PC-3 (cell line): ENCODE measurements at regions of chr3 and their contacts with region 1.

Region 1: GRCh38 chr3:183385698-183386613 is 42.5 kb downstream of the MCF2L2 start:
- DNase-seq: peak; percentile 86
- ATAC-seq: peak; percentile 73
- H3K4me3 ChIP-seq: no peak overlapping the region
- H3K27ac ChIP-seq: no peak overlapping the region
- H3K4me1 ChIP-seq: peaks cover 24% of the 10 kb centered on the region
- H3K27me3 ChIP-seq: no peaks in the 10 kb centered on the region
- CTCF ChIP-seq: peak; percentile 91

Region 2: GRCh38 chr3:182909318-182910040 is 476.5 kb before region 1 on chr3:
- CTCF ChIA-PET with region 1: no interaction called
- POLR2A ChIA-PET with region 1: no interaction called
- intact Hi-C with region 1: loop called (anchors 2 kb)
- DNase-seq: peak; percentile 38
- ATAC-seq: peak; percentile 51
- H3K4me3 ChIP-seq: no peak overlapping the region
- H3K27ac ChIP-seq: no peak overlapping the region
- H3K4me1 ChIP-seq: 0 out of 2 replicates have a peak, but pooled peaks cover 3% of the 10 kb centered on the region
- H3K27me3 ChIP-seq: no peaks in the 10 kb centered on the region
- CTCF ChIP-seq: peak; percentile 77

Region 3: GRCh38 chr3:183188895-183189462 is 197.0 kb before region 1 on chr3:
- CTCF ChIA-PET with region 1: interaction called, 55 read pairs
- POLR2A ChIA-PET with region 1: interaction called, 4 read pairs
- intact Hi-C with region 1: loop called (anchors 1 kb)
- DNase-seq: peak; percentile 48
- ATAC-seq: no peak
- H3K4me3 ChIP-seq: no peak overlapping the region
- H3K27ac ChIP-seq: no peak overlapping the region
- H3K4me1 ChIP-seq: peaks cover 37% of the 10 kb centered on the region
- H3K27me3 ChIP-seq: no peaks in the 10 kb centered on the region
- CTCF ChIP-seq: peak; percentile 56

Region 4: GRCh38 chr3:183328823-183329222 is 57.1 kb before region 1 on chr3:
- CTCF ChIA-PET with region 1: interaction called, 4 read pairs
- POLR2A ChIA-PET with region 1: no interaction called
- intact Hi-C with region 1: loop called (anchors 1 kb)
- DNase-seq: peak; percentile 56
- ATAC-seq: peak; percentile 11
- H3K4me3 ChIP-seq: no peak overlapping the region
- H3K27ac ChIP-seq: peak overlapping the region; percentile 17; the same call in 1 of the 2 replicates
- H3K4me1 ChIP-seq: peaks cover 42% of the 10 kb centered on the region
- H3K27me3 ChIP-seq: no peaks in the 10 kb centered on the region
- CTCF ChIP-seq: no peak

Region 5: GRCh38 chr3:183635431-183636220 is 249.7 kb after region 1 on chr3 and contains the start of gene KLHL24:
- CTCF ChIA-PET with region 1: no interaction called
- POLR2A ChIA-PET with region 1: no interaction called
- intact Hi-C with region 1: no loop called
- DNase-seq: peak; percentile 93
- ATAC-seq: peak; percentile 86
- H3K4me3 ChIP-seq: peak within 1 kb of the TSS; percentile 75
- H3K27ac ChIP-seq: peak within 1 kb of the TSS; percentile 6; the same call in 1 of the 2 replicates
- H3K4me1 ChIP-seq: peaks cover 25% of the 10 kb centered on the region
- H3K27me3 ChIP-seq: no peaks in the 10 kb centered on the region
- CTCF ChIP-seq: 0 out of 2 replicates have a peak, but pooled peaks have one; percentile 13
- total RNA-seq, gene KLHL24: 7.4 and 10.0 TPM in 2 replicates